HCT116 (cell line): ENCODE measurements at regions of chr5 and their contacts with region 1.

Region 1: DNA sequence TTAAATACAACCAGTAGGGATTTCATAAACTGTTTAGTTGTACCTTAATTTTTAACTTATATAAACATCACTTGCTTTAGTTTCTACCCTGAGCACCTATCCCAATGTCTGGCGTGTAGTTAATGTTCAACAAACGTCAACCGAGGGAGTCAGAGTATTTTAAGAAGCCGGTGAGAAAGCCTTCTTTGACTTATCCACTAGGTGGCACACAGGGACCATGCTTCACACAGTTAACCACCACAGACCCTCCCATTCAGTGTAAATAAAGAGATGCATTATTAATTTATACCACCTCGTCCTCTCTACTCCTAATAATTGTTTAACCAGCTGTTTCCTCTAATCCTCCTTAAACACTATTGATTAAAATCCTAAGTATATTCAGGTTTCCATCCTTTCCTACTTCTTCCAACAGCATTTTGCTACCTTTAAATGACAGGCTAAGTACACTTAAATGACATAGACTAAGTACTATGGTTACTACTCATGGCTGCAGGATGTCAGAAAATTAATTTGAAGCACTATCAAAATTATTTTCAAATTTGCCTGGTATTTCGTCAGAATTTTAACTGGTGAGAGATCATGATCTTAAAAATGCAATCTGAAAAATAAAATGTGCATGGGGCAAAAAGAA is 2.3 kb downstream of the HAPLN1 start:
- DNase-seq: peak; percentile 59
- ATAC-seq: peak; percentile 62
- H3K4me3 ChIP-seq: no peak overlapping the region
- H3K27ac ChIP-seq: no peak overlapping the region
- H3K4me1 ChIP-seq: peaks cover 8 to 16% of the 10 kb centered on the region in 2 experiments; a peak in 3 of 4 replicates
- H3K27me3 ChIP-seq: no peaks in the 10 kb centered on the region
- CTCF ChIP-seq: peak; percentile 62 to 91 (median 76); a peak in 5 of 6 replicates
- POLR2A ChIP-seq: no peak
- RAD21 ChIP-seq: peak; percentile 88

Region 2: GRCh38 chr5:82312373-82312856 is 1405.9 kb before region 1 on chr5:
- CTCF ChIA-PET with region 1: no interaction called
- POLR2A ChIA-PET with region 1: no interaction called
- RAD21 ChIA-PET with region 1: no interaction called
- intact Hi-C with region 1: loop called (anchors 10 kb)
- DNase-seq: peak; percentile 54
- ATAC-seq: peak; percentile 80
- H3K4me3 ChIP-seq: peak overlapping the region in 1 of 2 experiments; percentile 29; a peak in 1 of 4 replicates
- H3K27ac ChIP-seq: peak overlapping the region; percentile 53
- H3K4me1 ChIP-seq: peaks cover 17 to 18% of the 10 kb centered on the region in 2 experiments
- H3K27me3 ChIP-seq: no peaks in the 10 kb centered on the region
- CTCF ChIP-seq: peak; percentile 65 to 97 (median 87); a peak in 5 of 6 replicates
- POLR2A ChIP-seq: no peak
- RAD21 ChIP-seq: peak; percentile 90

Region 3: DNA sequence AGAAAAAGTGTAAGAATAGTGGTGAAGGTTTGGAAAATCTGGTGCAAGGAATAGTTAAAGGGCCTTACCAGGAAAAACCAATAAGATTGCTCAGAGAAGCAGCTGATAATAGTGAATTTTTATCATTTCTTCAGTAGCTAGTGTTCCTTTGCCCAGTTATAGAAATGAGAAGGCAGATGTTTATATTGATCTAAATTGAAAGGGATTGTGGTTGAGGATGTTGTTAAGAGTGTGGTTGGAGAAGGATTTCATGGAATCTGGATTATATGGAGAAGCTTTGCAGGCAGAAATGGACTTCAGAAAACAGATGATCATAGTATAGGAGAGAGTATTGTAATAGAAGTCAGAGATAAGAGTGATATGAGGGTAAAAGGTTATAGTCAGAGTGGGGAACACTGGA is 538.3 kb before region 1 on chr5:
- CTCF ChIA-PET with region 1: no interaction called
- POLR2A ChIA-PET with region 1: no interaction called
- RAD21 ChIA-PET with region 1: no interaction called
- intact Hi-C with region 1: no loop called
- DNase-seq: no peak
- ATAC-seq: no peak
- H3K4me3 ChIP-seq: no peak overlapping the region
- H3K27ac ChIP-seq: no peak overlapping the region
- H3K4me1 ChIP-seq: no peaks in the 10 kb centered on the region
- H3K27me3 ChIP-seq: no peaks in the 10 kb centered on the region
- CTCF ChIP-seq: no peak
- POLR2A ChIP-seq: no peak
- RAD21 ChIP-seq: no peak

Region 4: DNA sequence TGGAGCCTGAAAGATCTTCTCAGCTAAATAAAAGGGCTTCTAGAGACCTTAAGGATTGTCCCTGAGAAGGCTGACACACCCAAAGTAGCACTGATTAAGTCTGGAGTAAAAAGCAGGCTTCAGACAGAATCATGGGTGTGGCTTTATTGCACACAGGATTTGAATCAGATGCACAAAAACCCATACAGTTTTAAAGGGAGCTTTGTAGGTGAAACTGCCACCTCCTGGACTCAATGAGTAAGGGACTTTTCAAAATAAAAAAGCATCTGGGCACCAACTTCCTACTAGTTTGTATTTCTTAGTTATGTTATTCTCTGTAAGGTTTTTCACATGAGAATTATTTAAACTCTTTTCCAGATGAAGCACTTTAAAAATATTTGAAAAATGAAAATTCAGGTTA is 537.0 kb after region 1 on chr5:
- CTCF ChIA-PET with region 1: interaction called, 8 read pairs
- POLR2A ChIA-PET with region 1: no interaction called
- RAD21 ChIA-PET with region 1: interaction called in 1 of 2 experiments, 3 read pairs
- intact Hi-C with region 1: loop called (anchors 1 kb)
- DNase-seq: peak; percentile 47
- ATAC-seq: peak; percentile 80
- H3K4me3 ChIP-seq: no peak overlapping the region
- H3K27ac ChIP-seq: no peak overlapping the region
- H3K4me1 ChIP-seq: peaks cover 0 to 3% of the 10 kb centered on the region in 2 experiments; a peak in 2 of 4 replicates
- H3K27me3 ChIP-seq: no peaks in the 10 kb centered on the region
- CTCF ChIP-seq: peak; percentile 43 to 59 (median 57); a peak in 5 of 6 replicates
- POLR2A ChIP-seq: no peak
- RAD21 ChIP-seq: peak; percentile 61